Heart right ventricle (tissue), 16 donors: ENCODE measurements at regions of chr10 and their contacts with region 1.

Region 1: GRCh38 chr10:34677591-34677990 is 137.5 kb downstream of the PARD3 start:
- DNase-seq: no peak
- ATAC-seq: no peak
- H3K4me3 ChIP-seq: no peak overlapping the region
- H3K27ac ChIP-seq: no peak overlapping the region
- H3K4me1 ChIP-seq: peaks cover 0 to 13% (median 8%) of the 10 kb centered on the region in 9 donors
- H3K27me3 ChIP-seq: no peaks in the 10 kb centered on the region
- CTCF ChIP-seq: no peak

Region 2: GRCh38 chr10:34804306-34804705 is 126.7 kb after region 1 on chr10:
- intact Hi-C with region 1: no loop called
- DNase-seq: no peak
- ATAC-seq: no peak
- H3K4me3 ChIP-seq: no peak overlapping the region
- H3K27ac ChIP-seq: no peak overlapping the region
- H3K4me1 ChIP-seq: peaks cover 1 to 32% (median 26%) of the 10 kb centered on the region in 9 donors
- H3K27me3 ChIP-seq: peaks cover 0 to 2% (median 0%) of the 10 kb centered on the region in 7 donors
- CTCF ChIP-seq: no peak

Region 3: GRCh38 chr10:34835908-34836508 is 158.4 kb after region 1 on chr10:
- intact Hi-C with region 1: loop called in 1 of 10 experiments (anchors 10 kb)
- DNase-seq: no peak
- ATAC-seq: no peak
- H3K4me3 ChIP-seq: no peak overlapping the region
- H3K27ac ChIP-seq: no peak overlapping the region
- H3K4me1 ChIP-seq: no peaks in the 10 kb centered on the region
- H3K27me3 ChIP-seq: peaks cover 0 to 12% (median 0%) of the 10 kb centered on the region in 7 donors
- CTCF ChIP-seq: no peak

Region 4: DNA sequence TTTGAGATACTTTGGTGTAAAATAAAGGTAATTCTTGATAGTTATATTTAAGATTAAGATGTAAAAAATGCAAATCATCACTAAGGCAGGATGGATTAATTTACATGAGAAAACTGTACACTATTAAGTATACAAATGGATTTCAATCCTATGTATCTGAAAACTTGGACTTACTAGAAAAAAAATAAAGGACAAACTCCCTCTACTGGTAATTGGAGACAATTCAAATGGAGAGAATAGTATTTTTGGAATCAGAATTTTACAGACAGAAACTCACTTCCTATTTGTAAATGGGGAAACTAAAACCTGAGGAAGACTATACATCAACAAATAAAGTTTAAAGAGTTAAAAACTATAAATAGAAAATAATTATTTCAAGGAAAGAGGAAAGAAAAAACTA is 350.0 kb after region 1 on chr10:
- intact Hi-C with region 1: loop called in 1 of 10 experiments (anchors 10 kb)
- DNase-seq: no peak
- ATAC-seq: no peak
- H3K4me3 ChIP-seq: no peak overlapping the region
- H3K27ac ChIP-seq: no peak overlapping the region
- H3K4me1 ChIP-seq: no peaks in the 10 kb centered on the region
- H3K27me3 ChIP-seq: no peaks in the 10 kb centered on the region
- CTCF ChIP-seq: peak in 7 of 9 donors; percentile 31 to 60 (median 47)